Activated CD8-positive, alpha-beta T cell treated with anti-CD3 and anti-CD28 coated beads for 36 hours (primary cell): ENCODE measurements at regions of chr11 and their contacts with region 1.

Region 1: DNA sequence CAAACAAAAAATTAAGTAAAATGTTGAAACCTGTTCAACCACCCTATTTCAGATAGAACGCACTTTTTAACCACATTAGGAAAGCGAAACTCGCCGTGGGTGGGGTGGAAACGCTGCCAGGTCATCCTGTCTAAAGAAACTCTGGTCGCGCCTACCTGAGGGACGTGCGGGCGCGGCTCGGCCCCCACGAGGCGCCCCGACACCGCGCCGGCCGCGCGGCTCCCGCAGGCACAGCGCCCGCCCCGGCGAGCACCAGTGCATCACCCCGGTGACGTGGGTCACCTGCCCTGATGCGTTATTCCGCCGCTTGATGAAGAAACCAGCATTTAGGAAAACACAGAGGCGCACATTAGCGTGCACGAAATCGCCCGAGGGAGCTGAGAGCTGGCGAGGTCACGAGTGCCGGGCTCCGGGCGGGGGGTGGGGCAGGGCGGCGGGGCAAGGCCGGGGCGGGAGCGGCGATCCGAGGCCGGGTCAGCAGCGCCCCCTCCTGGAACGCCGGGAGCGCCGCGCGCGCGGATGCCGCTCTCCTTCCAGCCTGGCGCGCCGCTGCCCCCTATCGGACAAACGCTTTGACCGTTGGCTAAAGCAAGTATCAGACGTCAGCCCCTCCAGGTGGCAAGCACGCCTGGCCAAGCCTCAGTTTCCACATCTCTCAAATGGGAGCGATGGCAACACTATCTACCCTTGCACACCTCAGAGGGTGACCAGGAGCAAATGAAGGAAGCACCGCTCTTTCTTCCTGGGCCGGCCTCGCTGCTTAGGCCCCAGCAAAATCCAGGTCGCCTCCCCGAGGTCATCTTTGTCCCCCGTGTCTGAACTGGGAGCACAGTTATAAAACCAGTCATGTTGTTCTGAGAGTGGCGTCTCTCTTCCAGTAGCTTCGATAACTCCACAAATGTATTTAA is 15.7 kb upstream of the SNX32 start:
- DNase-seq: peak; percentile 97
- ATAC-seq: peak; percentile 94
- H3K4me3 Mint-ChIP-seq: peak overlapping the region; percentile 72
- H3K27ac Mint-ChIP-seq: peak overlapping the region; percentile 82
- H3K4me1 Mint-ChIP-seq: peaks cover 17% of the 10 kb centered on the region
- H3K27me3 Mint-ChIP-seq: no peaks in the 10 kb centered on the region
- CTCF ChIP-seq: peak; percentile 100

Region 2: GRCh38 chr11:65711785-65712632 is 106.1 kb before region 1 on chr11 and contains the start of gene KAT5:
- CTCF ChIA-PET with region 1: interaction called, 41 read pairs
- POLR2A ChIA-PET with region 1: interaction called, 9 read pairs
- intact Hi-C with region 1: loop called (anchors 5 kb)
- DNase-seq: peak; percentile 99
- ATAC-seq: peak; percentile 82
- H3K4me3 Mint-ChIP-seq: peak within 1 kb of the TSS; percentile 93
- H3K27ac Mint-ChIP-seq: peak within 1 kb of the TSS; percentile 98
- H3K4me1 Mint-ChIP-seq: peaks cover 20% of the 10 kb centered on the region
- H3K27me3 Mint-ChIP-seq: no peaks in the 10 kb centered on the region
- CTCF ChIP-seq: peak; percentile 93
- total RNA-seq, gene KAT5: 67.7 to 71.8 TPM

Region 3: GRCh38 chr11:65766535-65766934 is 51.6 kb before region 1 on chr11:
- CTCF ChIA-PET with region 1: interaction called, 235 read pairs
- POLR2A ChIA-PET with region 1: no interaction called
- intact Hi-C with region 1: no loop called
- DNase-seq: no peak
- ATAC-seq: no peak
- H3K4me3 Mint-ChIP-seq: no peak overlapping the region
- H3K27ac Mint-ChIP-seq: no peak overlapping the region
- H3K4me1 Mint-ChIP-seq: peaks cover 4% of the 10 kb centered on the region
- H3K27me3 Mint-ChIP-seq: no peaks in the 10 kb centered on the region
- CTCF ChIP-seq: no peak

Region 4: DNA sequence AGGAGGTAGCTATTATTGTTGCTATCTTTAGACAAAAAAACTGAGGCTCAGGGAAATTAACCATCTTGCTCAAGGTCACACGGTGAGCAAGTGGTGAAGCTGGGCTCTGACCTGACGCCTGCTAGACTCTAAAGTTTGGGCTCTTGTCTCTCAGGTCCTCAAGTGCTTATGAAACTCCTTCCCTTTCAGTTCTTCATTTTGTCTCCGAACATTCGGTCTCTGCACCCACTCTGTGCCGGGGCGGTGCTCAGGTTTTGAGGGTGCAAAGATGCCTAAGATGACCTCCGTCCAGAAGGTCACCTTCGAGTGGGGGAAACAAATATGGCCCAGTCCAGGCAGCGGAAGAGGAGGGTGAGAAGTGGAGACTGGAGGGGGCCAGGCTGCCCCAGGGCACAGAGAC is 15.2 kb before region 1 on chr11:
- CTCF ChIA-PET with region 1: interaction called, 16 read pairs
- POLR2A ChIA-PET with region 1: interaction called, 5 read pairs
- intact Hi-C with region 1: no loop called
- DNase-seq: no peak
- ATAC-seq: no peak
- H3K4me3 Mint-ChIP-seq: no peak overlapping the region
- H3K27ac Mint-ChIP-seq: no peak overlapping the region
- H3K4me1 Mint-ChIP-seq: peaks cover 3% of the 10 kb centered on the region
- H3K27me3 Mint-ChIP-seq: peaks cover 36% of the 10 kb centered on the region
- CTCF ChIP-seq: no peak

Region 5: GRCh38 chr11:66106786-66107599 is 288.9 kb after region 1 on chr11:
- CTCF ChIA-PET with region 1: no interaction called
- POLR2A ChIA-PET with region 1: no interaction called
- intact Hi-C with region 1: no loop called
- DNase-seq: peak; percentile 80
- ATAC-seq: peak; percentile 71
- H3K4me3 Mint-ChIP-seq: peak overlapping the region; percentile 15
- H3K27ac Mint-ChIP-seq: peak overlapping the region; percentile 93
- H3K4me1 Mint-ChIP-seq: peaks cover 85% of the 10 kb centered on the region
- H3K27me3 Mint-ChIP-seq: no peaks in the 10 kb centered on the region
- CTCF ChIP-seq: no peak